Adrenal gland (tissue), 19 donors: ENCODE measurements at regions of chr21 and their contacts with region 1.

Region 1: DNA sequence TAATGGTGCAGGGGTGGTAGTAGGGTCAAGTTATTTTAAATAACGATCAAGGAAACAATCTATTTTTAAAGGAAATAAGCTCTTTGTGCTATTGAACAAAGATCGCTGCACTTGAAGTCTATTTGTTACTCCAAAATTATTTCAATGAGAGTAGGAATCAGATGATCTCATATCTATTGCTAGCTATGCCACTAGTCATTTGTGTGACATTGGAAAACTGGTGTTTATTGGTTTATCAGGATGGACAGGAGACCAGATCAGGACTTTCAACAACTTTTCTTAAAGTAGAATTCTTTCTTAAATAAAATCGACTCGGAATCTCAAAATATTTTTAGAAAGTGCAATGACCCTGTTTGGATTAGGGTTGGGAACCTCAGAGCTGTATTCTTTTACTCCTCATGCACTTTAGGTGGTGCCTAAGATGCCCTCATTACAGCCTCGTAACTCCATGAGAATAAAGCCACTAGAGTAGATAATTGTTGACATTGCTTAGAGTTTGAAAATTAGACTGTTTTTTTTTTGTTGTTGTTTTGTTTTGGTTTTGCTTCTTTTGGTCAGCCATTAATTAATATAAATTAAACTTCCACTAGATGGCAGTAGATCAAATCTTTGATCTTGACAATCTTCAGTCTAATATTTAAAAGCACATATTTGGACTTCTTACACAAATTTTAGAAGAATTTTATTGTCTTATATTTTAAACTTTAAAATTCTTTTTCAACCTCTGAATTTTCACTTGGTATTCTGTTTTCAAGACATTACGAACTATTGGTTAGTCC is 352.4 kb downstream of the USP25 start:
- DNase-seq: no peak
- H3K4me3 ChIP-seq: peak overlapping the region in 2 of 4 donors; percentile 20 to 43
- H3K27ac ChIP-seq: peak overlapping the region in 2 of 5 donors; percentile 32 to 55
- H3K4me1 ChIP-seq: no peaks in the 10 kb centered on the region
- H3K27me3 ChIP-seq: no peaks in the 10 kb centered on the region
- CTCF ChIP-seq: peak; percentile 33 to 65 (median 64)
- POLR2A ChIP-seq: no peak

Region 2: DNA sequence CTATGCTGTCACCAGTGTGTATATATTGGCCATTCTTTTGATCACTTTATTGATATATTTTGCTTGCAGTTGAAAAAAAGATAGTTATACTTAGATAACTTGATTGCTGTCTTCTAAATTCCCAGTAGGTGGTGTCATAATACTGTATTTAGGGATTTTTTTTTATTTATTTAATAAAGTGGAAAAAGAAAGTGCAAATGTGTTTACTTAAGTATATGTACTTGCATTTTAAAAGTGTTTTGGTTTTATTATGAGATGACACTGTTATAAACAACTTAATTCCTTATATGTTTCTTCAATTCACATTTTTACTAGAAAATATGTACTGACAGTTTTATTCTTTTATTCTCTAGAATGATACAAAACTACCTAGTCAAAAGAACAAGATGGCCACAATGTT is 187.6 kb before region 1 on chr21:
- intact Hi-C with region 1: no loop called
- DNase-seq: no peak
- H3K4me3 ChIP-seq: no peak overlapping the region
- H3K27ac ChIP-seq: no peak overlapping the region
- H3K4me1 ChIP-seq: no peaks in the 10 kb centered on the region
- H3K27me3 ChIP-seq: no peaks in the 10 kb centered on the region
- CTCF ChIP-seq: peak in 5 of 6 experiments; percentile 9 to 52 (median 46)
- POLR2A ChIP-seq: no peak

Region 3: DNA sequence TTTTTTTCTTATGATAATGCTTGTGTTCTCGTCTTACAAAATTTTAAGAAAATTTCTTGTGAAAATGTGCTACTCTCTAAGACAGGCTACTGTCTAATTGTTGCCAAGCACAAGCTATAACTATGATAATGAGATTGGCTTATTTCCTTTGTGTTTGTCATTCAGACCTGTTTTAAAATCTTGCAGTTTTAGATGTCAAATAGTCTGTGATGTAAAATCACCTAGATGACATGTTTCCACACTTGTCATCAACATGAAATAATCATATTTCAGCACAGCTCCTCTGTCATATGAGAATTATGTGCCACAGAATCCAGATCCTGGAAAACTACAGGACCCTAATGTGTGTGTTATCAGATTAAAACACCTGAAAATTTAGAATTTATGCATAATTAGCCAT is 187.2 kb after region 1 on chr21:
- intact Hi-C with region 1: loop called in 1 of 2 experiments (anchors 5 kb)
- DNase-seq: no peak
- H3K4me3 ChIP-seq: no peak overlapping the region
- H3K27ac ChIP-seq: no peak overlapping the region
- H3K4me1 ChIP-seq: no peaks in the 10 kb centered on the region
- H3K27me3 ChIP-seq: no peaks in the 10 kb centered on the region
- CTCF ChIP-seq: no peak
- POLR2A ChIP-seq: no peak

Region 4: DNA sequence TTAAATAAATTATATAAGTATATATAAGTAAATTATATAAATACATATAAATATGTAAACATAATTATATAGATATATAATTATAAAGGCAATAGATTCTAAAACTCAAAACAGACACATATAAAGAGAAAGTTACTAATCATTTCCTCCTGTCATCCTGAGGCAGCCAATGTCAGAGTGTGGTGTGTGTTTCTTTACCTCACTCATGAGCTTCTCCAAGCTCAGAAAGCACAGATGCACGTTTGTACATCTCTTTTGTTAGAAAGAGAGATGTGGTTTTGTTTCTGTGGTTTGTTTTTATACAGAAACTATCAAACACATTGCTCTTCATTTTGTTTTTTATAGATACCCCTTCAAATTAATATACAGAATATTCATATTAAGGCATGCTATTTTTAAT is 242.4 kb after region 1 on chr21:
- intact Hi-C with region 1: loop called in 1 of 2 experiments (anchors 5 kb)
- DNase-seq: no peak
- H3K4me3 ChIP-seq: no peak overlapping the region
- H3K27ac ChIP-seq: no peak overlapping the region
- H3K4me1 ChIP-seq: peaks cover 0 to 1% of the 10 kb centered on the region in 2 donors
- H3K27me3 ChIP-seq: no peaks in the 10 kb centered on the region
- CTCF ChIP-seq: no peak
- POLR2A ChIP-seq: no peak

Region 5: GRCh38 chr21:16330082-16330907 is 248.1 kb after region 1 on chr21:
- intact Hi-C with region 1: loop called (anchors 5 to 10 kb)
- DNase-seq: peak in 6 of 7 donors; percentile 25 to 55 (median 34)
- H3K4me3 ChIP-seq: no peak overlapping the region
- H3K27ac ChIP-seq: peak overlapping the region in 1 of 5 donors; percentile 15
- H3K4me1 ChIP-seq: peaks cover 0 to 4% of the 10 kb centered on the region in 2 donors
- H3K27me3 ChIP-seq: no peaks in the 10 kb centered on the region
- CTCF ChIP-seq: peak; percentile 67 to 84 (median 79)
- POLR2A ChIP-seq: no peak

Region 6: DNA sequence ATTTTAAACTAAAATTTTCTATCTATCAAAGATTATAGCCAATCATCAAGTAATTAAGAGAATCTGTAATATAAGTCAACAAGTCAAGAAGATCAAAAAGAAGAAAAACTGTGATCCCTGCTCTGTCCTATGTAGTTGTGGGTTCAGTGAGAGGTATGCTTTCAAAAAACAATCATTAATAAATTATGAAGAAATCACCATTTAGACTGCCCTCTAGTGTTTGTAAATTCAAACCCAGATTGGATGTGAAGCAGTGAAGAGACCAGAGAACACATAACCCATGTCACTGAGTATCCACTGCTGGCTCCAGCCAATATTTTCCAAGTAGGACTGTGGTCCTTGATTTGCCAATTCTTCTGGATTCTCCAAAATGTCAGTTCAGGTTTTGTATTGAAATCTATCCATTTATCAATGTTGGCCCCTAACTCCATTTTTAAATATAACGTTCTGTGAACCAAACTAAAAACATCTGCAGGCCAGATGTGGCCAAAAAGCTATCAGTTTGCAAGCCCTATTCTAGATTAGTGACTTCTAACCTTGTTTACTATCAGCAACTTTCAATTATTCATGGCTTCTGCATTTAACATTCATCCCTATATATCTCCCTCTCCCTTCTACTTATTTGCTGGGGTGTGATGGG is 963.1 kb after region 1 on chr21:
- intact Hi-C with region 1: loop called in 1 of 2 experiments (anchors 10 kb)
- DNase-seq: no peak
- H3K4me3 ChIP-seq: no peak overlapping the region
- H3K27ac ChIP-seq: no peak overlapping the region
- H3K4me1 ChIP-seq: no peaks in the 10 kb centered on the region
- H3K27me3 ChIP-seq: no peaks in the 10 kb centered on the region
- CTCF ChIP-seq: peak; percentile 24 to 58 (median 34)
- POLR2A ChIP-seq: no peak